Right cardiac atrium (tissue), 5 donors: ENCODE measurements at regions of chr4 and their contacts with region 1.

Region 1: DNA sequence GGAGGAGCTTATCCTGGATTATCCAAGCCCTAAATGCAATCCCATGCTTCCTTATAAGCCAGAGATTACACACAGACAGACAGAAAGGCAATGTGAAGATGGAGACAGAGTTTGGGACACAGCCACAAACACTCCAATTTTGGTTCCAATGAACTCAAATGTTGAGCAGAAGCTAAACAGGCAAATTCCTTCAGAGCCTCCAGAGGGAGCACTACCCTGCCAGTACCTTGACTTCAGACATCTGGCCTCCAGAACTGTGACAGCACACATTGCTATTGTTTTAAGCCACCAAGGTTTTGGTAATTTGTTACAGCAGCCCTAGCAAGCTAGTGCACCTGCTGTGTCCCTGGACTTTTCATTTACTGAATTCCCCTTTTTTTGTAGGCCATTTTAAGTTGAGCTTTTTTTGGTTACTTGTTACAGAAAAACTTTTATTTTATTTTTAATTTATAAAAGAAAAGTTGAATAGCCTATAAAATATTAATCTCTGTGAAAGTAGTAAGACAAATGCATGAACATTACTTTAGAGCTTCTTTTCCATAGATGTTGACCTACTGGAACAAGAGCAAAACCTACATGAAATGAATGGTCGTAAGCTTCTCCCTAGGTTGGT is 33.4 kb upstream of the SRD5A3 start:
- DNase-seq: peak in 2 of 3 donors; percentile 32 to 52
- ATAC-seq: peak; percentile 76 to 80
- H3K4me3 ChIP-seq: no peak overlapping the region
- H3K27ac ChIP-seq: no peak overlapping the region
- H3K4me1 ChIP-seq: no peaks in the 10 kb centered on the region
- H3K27me3 ChIP-seq: no peaks in the 10 kb centered on the region

Region 2: DNA sequence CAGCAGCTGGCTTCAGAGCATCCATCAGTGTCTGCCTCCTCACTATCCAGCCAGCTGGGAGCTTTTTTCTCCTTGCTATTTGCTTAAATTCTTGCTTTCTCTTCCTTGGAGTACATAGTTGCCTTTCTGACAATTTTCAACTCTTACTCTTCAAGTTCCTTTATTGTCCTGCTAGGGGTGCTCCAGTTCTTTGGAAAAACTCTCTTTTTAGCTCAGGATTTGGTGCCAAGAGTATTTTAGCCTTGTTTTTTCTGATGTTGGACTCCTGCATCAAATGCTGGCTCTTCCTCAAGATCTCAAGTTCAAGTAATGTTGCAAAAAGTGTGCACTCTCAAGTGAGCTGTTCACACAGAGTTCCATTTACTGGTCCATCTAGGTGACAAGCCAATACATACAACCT is 313.6 kb before region 1 on chr4:
- intact Hi-C with region 1: loop called in 1 of 4 experiments (anchors 10 kb)
- DNase-seq: no peak
- ATAC-seq: peak; percentile 71 to 77
- H3K4me3 ChIP-seq: no peak overlapping the region
- H3K27ac ChIP-seq: no peak overlapping the region
- H3K4me1 ChIP-seq: no peaks in the 10 kb centered on the region
- H3K27me3 ChIP-seq: no peaks in the 10 kb centered on the region

Region 3: DNA sequence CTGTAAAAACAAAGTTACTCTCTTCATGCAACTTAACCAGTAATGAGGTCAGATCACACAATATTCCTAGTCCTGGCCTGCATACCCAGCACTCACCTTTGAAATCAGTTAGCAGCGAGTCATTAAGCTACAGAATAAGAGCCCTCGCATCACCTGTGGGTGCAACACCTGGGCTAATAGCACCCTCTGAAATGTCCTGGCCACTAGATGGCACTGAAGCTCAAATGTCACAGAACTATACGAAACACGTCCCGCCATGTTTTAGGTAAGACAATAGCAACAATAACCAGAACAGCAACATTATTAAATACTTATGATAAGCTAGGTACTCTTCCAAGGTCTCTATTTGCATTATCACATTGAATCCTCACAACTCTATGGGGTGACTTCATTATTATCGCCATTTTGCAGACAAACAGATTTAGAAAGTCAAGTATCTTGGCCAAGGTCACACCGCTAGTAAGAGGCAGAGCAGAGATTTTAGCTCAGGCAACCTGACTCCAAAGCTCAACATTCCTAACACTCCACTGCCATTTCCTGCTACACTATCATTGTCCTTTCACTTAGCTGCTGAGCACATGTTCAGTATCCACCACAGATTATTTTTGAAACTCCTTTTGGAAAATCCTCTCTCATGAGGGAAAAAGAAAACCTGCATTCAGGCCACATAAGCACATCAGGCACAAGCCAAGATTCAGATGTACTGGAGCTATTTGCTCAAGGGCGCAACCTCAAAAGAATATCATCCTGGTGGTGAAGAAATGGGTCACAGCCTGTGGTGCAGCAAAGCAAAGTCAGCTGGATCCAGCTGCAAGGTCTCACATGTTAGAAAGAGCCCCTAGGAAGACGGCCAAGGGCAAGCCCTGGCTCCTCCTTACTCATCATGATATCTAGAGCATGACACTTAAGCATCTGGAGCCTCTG is 127.7 kb before region 1 on chr4:
- intact Hi-C with region 1: loop called in 1 of 4 experiments (anchors 10 kb)
- DNase-seq: no peak
- ATAC-seq: peak; percentile 59 to 65
- H3K4me3 ChIP-seq: no peak overlapping the region
- H3K27ac ChIP-seq: no peak overlapping the region
- H3K4me1 ChIP-seq: peaks cover 2% of the 10 kb centered on the region
- H3K27me3 ChIP-seq: no peaks in the 10 kb centered on the region

Region 4: GRCh38 chr4:55386073-55386472 is 73.5 kb after region 1 on chr4:
- intact Hi-C with region 1: no loop called
- DNase-seq: no peak
- ATAC-seq: no peak
- H3K4me3 ChIP-seq: no peak overlapping the region
- H3K27ac ChIP-seq: no peak overlapping the region
- H3K4me1 ChIP-seq: no peaks in the 10 kb centered on the region
- H3K27me3 ChIP-seq: no peaks in the 10 kb centered on the region

Region 5: DNA sequence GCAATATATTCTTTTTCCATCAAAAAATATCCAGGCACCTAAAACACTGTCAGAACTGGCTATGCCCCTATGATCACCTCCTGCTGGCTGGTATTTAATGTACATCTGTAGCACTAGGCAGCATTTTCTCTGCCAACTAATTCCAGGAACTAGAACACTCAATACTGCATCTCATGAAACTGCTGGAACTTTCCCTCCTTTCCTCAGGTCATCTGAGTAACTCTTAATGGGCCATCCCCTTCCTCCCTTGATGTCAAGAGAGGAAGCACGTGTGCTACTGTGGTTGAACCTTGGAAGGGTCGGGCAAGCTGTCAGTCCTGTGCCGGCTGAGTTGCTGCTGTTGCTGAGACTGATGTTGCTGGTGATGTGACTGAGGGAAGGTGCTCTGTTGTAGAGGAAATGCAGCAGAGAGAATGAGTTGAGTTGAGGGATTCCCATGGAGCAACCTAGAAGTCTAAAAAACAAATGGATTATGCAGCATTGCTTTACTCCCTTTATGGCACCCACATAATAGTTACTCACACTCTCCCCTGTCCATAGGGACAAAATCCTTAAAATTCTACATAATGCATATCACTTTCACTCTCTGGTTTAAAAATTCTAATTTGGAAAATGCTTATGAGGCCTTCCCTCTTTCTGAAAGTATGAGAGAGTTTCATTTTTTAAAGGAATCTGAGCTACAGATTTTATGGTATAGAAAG is 122.7 kb after region 1 on chr4:
- intact Hi-C with region 1: no loop called
- DNase-seq: no peak
- ATAC-seq: peak; percentile 28 to 38
- H3K4me3 ChIP-seq: no peak overlapping the region
- H3K27ac ChIP-seq: no peak overlapping the region
- H3K4me1 ChIP-seq: no peaks in the 10 kb centered on the region
- H3K27me3 ChIP-seq: no peaks in the 10 kb centered on the region